AG04450 (cell line): ENCODE measurements at regions of chr11 and their contacts with region 1.

Region 1: DNA sequence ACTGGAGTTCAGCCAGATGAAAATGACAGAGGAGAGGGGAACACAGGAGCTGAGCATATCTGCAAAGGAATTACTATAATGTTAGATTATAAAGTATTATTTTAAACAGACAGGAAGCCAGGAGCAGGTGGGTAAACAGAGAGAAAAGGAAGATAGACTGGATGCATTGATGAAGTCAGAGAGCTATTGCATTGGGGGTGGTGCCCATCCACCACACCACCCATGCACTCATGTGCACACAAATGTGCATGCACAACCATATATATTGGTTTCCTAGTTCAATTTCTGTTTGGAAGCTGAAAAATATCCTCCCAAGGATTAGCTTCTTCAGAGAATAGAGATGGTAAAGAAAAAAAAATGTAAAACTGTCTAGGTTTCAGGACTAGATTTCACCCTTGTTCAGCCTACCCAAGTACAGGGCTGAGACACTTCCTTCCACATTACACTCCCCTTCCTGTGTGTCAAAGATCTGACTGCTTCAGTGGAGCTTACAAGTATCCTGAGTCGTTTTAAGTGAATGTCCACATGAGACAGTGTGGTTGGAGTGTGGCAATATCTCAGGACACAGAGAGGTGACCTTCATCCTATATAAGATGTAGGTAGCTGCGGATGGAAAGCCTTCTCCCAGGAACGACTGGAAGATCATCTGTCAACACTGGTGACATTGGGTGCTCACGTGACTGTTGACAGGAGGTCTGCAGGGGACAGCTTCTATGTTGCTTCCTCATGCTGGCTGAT is 12.2 kb upstream of the SMPD1 start:
- DNase-seq: no peak
- H3K4me3 ChIP-seq: no peak overlapping the region
- H3K27ac ChIP-seq: no peak overlapping the region
- H3K27me3 ChIP-seq: peaks cover 2% of the 10 kb centered on the region
- CTCF ChIP-seq: no peak

Region 2: DNA sequence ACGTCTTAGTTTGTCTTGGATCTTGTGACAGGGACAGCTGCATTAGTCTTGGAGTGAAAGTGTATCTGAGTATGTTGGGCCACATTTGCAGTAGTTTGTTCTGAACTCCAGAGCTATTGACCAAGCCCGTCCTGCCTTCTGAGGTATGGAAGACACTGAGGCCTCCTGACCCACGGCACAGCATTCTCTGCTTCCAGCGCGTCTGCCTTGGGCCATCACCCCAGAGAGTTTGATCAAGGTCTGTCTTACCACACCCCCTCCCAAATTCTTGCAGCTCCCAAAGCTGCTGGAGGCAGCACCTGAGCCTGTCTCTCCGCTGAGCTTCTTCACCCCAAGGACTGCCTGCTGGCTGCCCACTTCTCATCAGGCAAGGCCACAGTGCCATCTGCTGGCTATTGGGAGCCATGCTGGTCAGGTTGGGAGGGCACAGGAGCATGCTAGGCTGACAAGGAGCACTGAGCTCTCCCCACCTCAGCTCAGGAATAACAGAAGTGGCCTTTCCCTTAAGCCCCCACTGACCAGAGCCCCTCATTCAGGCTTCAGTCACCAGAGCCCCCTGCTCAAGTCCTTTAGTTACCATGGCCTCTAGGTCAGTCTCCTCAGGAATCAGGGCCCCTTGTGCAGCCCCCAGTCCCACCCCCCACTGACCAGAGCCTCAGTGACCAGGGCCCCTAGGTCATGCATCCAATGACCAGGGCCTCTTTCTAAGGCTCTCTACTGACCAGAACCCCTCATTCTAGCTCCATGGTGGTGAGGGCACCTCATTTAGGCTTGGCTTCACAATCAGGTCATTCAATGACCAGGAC is 15.0 kb before region 1 on chr11:
- CTCF ChIA-PET with region 1: interaction called, 113 read pairs
- POLR2A ChIA-PET with region 1: no interaction called
- DNase-seq: peak; percentile 54
- H3K4me3 ChIP-seq: no peak overlapping the region
- H3K27ac ChIP-seq: no peak overlapping the region
- H3K27me3 ChIP-seq: no peaks in the 10 kb centered on the region
- CTCF ChIP-seq: peak; percentile 98

Region 3: DNA sequence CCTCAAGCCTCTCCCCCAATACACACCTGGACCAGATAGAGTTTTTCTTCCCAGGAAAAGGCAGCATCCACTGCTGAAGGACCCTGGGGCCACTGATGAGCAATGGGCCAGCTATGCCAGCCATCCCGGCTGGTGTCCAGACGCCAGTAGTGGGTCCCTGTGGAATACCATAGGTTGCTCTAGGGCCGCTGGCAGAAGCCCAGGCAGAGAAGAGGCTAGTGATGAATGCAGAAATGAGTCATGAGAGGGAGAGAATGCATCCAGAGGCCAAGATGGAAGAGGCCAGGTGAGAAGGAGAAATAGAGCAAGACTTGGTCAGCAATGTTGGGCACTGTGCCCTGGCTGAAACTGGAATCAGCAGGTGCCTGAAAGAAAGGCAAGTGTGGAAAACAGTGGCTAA is 53.8 kb after region 1 on chr11:
- CTCF ChIA-PET with region 1: interaction called, 604 read pairs
- POLR2A ChIA-PET with region 1: no interaction called
- DNase-seq: no peak
- H3K4me3 ChIP-seq: no peak overlapping the region
- H3K27ac ChIP-seq: no peak overlapping the region
- H3K27me3 ChIP-seq: no peaks in the 10 kb centered on the region
- CTCF ChIP-seq: no peak

Region 4: GRCh38 chr11:6473481-6474422 is 95.7 kb after region 1 on chr11 and contains the start of gene TRIM3:
- CTCF ChIA-PET with region 1: interaction called, 44 read pairs
- POLR2A ChIA-PET with region 1: no interaction called
- DNase-seq: peak; percentile 50
- H3K4me3 ChIP-seq: peak within 1 kb of the TSS; percentile 84
- H3K27ac ChIP-seq: peak within 1 kb of the TSS; percentile 94
- H3K27me3 ChIP-seq: no peaks in the 10 kb centered on the region
- CTCF ChIP-seq: peak; percentile 57
- polyA plus RNA-seq, gene TRIM3: 10.5 and 11.7 TPM in 2 replicates

Region 5: DNA sequence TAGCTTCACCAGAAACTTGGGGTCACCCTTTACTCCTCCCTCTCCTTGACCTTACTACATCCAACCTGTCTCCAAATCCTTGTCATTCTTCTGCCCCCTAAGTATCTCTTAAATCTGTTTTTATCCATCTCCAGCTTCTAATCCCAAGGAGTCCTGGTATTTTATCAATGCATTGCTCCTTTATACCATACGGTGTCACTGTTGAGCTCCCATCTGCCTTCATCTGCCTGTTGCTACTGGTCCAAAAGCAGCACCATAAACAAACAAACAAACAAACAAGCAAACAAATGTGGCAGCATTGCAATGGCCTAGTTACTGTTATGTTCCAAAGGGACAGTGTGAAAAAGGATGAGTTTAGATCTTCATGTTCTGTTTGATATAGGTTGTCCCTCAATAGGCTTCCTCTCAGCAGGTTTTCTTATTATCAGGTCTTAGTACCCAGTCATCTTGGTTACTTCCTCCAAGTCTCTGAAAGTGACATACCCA is 153.2 kb after region 1 on chr11:
- CTCF ChIA-PET with region 1: interaction called, 20 read pairs
- POLR2A ChIA-PET with region 1: no interaction called
- DNase-seq: no peak
- H3K4me3 ChIP-seq: no peak overlapping the region
- H3K27ac ChIP-seq: no peak overlapping the region
- H3K27me3 ChIP-seq: no peaks in the 10 kb centered on the region
- CTCF ChIP-seq: peak; percentile 82

Region 6: DNA sequence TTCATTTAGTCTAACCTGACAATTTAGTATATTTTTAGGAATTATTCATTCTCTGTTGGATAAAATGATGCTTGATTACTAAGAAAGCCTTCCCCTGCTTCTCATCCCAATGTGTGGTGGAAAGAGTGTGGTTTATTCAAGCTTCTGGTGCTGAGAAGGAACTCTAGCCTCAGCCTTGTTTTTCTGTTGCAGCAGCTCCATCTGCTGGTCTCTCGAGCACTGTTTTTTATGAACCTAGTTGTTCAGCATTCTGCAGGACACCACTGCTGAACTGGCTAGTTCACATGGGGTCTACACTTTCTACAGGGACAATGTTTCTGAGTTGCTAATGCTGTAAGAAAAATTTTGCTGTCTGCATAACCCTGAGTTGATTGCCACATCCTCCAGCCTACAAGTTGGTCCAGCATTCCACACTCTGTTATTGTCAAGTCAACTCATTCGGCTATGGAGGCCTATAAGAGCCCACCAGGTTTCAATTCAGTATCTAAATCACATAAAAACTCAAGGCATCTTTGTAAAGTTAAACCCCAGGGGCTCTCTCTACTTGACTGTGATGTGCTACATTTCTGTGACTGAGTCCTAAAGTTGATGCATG is 379.4 kb after region 1 on chr11:
- CTCF ChIA-PET with region 1: interaction called, 18 read pairs
- POLR2A ChIA-PET with region 1: no interaction called
- DNase-seq: peak; percentile 15
- H3K4me3 ChIP-seq: no peak overlapping the region
- H3K27ac ChIP-seq: no peak overlapping the region
- H3K27me3 ChIP-seq: no peaks in the 10 kb centered on the region
- CTCF ChIP-seq: peak; percentile 74